Head of caudate nucleus (tissue), 42 donors: ENCODE measurements at regions of chr1 and their contacts with region 1.

Region 1: DNA sequence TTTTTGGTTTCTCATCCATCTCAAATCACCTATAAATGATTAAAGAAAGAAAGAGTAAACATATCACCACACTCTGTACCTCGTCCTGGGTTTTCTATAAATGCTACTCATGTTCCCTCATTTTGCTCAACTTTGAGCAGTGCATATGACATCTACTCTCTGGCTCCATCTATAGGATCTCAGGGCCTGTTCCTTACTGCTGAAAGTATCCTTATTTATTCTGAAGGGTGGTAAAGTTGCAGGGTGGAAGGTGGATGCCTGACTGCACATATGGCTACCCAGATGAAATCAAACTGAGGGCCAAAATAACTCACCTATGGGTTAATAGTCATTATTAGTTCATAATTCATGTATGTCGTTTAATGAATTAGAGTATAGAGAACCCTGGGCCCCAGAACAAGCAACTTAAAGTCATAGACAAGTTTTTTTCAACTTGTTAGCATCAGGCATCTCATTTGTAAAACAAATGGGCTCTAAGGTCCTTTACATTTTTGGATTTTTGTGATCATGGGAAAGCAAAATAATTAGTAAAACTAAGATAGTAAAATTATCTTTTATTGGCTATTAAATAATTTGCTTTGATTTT is 46.5 kb downstream of the NCF2 start:
- DNase-seq: peak in 8 of 42 donors; percentile 21 to 62 (median 40)

Region 2: GRCh38 chr1:183281553-183282091 is 262.1 kb before region 1 on chr1:
- intact Hi-C with region 1: loop called (anchors 10 kb)
- DNase-seq: peak; percentile 47 to 95 (median 89)